CD4-positive, alpha-beta T cell (primary cell): ENCODE measurements at regions of chr3 and their contacts with region 1.

Region 1: DNA sequence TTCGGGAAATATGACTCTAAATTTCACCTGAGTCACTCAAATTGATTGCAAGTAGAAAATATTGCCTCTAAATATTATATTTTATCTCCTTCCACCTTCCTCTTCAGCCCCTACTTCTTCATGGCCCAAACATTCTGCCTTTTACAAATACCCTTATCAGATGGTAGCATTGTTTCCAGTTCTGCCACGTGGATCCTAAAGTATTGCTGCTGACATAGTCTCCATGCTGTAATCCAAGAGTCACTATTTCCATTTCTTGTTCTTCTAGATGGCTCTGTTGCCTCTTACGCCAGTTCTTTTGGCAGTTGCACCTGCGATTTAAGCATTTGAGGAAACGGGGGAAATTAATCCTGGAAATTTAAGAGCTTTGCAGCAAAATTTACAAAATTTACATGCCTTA is 13.6 kb downstream of the LMOD3 start:
- DNase-seq: no peak
- ATAC-seq: no peak
- H3K4me3 ChIP-seq: no peak overlapping the region
- H3K4me3 Mint-ChIP-seq: no peak overlapping the region
- H3K27ac ChIP-seq: no peak overlapping the region
- H3K27ac Mint-ChIP-seq: peak overlapping the region; percentile 4
- H3K4me1 ChIP-seq: peaks cover 7% of the 10 kb centered on the region
- H3K4me1 Mint-ChIP-seq: peaks cover 31% of the 10 kb centered on the region
- H3K27me3 ChIP-seq: no peaks in the 10 kb centered on the region
- H3K27me3 Mint-ChIP-seq: no peaks in the 10 kb centered on the region
- CTCF ChIP-seq: no peak

Region 2: GRCh38 chr3:68345781-68346180 is 763.0 kb before region 1 on chr3:
- CTCF ChIA-PET with region 1: no interaction called
- POLR2A ChIA-PET with region 1: no interaction called
- intact Hi-C with region 1: no loop called
- DNase-seq: no peak
- ATAC-seq: no peak
- H3K4me3 ChIP-seq: no peak overlapping the region
- H3K4me3 Mint-ChIP-seq: no peak overlapping the region
- H3K27ac ChIP-seq: no peak overlapping the region
- H3K27ac Mint-ChIP-seq: no peak overlapping the region
- H3K4me1 ChIP-seq: no peaks in the 10 kb centered on the region
- H3K4me1 Mint-ChIP-seq: no peaks in the 10 kb centered on the region
- H3K27me3 ChIP-seq: no peaks in the 10 kb centered on the region
- H3K27me3 Mint-ChIP-seq: no peaks in the 10 kb centered on the region
- CTCF ChIP-seq: no peak

Region 3: GRCh38 chr3:69120879-69121464 is 12.2 kb after region 1 on chr3:
- CTCF ChIA-PET with region 1: interaction called, 12 read pairs
- POLR2A ChIA-PET with region 1: interaction called, 5 read pairs
- intact Hi-C with region 1: no loop called
- DNase-seq: peak; percentile 61 to 90 (median 79)
- ATAC-seq: peak; percentile 94
- H3K4me3 ChIP-seq: no peak overlapping the region
- H3K4me3 Mint-ChIP-seq: no peak overlapping the region
- H3K27ac ChIP-seq: no peak overlapping the region
- H3K27ac Mint-ChIP-seq: no peak overlapping the region
- H3K4me1 ChIP-seq: no peaks in the 10 kb centered on the region
- H3K4me1 Mint-ChIP-seq: peaks cover 7% of the 10 kb centered on the region
- H3K27me3 ChIP-seq: no peaks in the 10 kb centered on the region
- H3K27me3 Mint-ChIP-seq: no peaks in the 10 kb centered on the region
- CTCF ChIP-seq: peak; percentile 93